ENCODE measurements at regions of chr10 and their contacts with region 1.

Region 1: GRCh38 chr10:84537447-84537931 is 209.1 kb downstream of the CCSER2 start:
- DNase-seq: no peak
- H3K4me3 ChIP-seq: no peak overlapping the region
- CTCF ChIP-seq: peak; percentile 53

Region 2: DNA sequence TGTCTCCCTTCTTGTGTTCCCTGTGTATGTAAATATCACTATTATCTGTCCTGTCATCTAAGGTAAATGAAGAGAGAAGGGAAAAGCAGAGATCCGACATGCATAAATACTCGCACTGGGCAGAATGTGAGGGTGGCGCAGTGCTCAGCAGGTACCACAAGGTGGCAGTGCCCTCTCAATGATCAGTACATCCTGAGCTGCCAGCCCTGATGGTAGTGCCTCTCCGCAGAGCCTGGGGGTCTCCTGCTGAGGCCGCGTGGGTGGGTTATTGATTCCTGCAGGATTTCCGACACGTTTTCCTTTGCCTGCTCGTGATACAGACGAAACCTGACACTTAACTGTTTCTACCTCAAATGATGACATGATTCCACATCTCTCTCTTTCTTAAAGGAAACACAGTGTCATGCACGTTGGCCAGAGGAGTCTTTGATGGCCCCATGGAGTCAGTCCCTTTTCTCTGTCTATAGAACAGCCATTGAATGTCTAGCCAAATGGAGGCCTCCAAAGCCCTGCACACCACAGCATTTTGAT is 272.8 kb before region 1 on chr10:
- CTCF ChIA-PET with region 1: interaction called, 631 read pairs
- POLR2A ChIA-PET with region 1: interaction called, 5 read pairs
- DNase-seq: no peak
- H3K4me3 ChIP-seq: no peak overlapping the region
- CTCF ChIP-seq: peak; percentile 98

Region 3: DNA sequence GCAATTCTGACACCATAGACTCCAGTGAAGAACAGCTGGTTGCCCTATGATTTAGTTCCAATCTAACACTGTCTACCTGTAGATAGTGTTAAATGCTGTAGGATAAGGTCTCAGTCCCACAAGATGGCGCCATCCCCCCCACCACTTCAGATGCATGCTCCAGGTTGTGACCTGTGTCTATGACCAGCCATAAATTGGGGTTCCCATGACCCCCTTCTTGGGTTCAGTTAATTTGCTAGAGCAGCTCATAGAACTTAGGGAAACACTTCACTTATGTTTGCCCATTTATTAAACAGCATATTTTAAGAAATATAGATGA is 196.0 kb before region 1 on chr10:
- CTCF ChIA-PET with region 1: interaction called, 10 read pairs
- POLR2A ChIA-PET with region 1: no interaction called
- DNase-seq: no peak
- H3K4me3 ChIP-seq: no peak overlapping the region
- CTCF ChIP-seq: no peak

Region 4: GRCh38 chr10:84375011-84375410 is 162.5 kb before region 1 on chr10:
- CTCF ChIA-PET with region 1: interaction called, 283 read pairs
- POLR2A ChIA-PET with region 1: no interaction called
- DNase-seq: peak; percentile 19
- H3K4me3 ChIP-seq: no peak overlapping the region
- CTCF ChIP-seq: peak; percentile 65

Region 5: GRCh38 chr10:84429926-84430520 is 107.5 kb before region 1 on chr10:
- CTCF ChIA-PET with region 1: interaction called, 44 read pairs
- POLR2A ChIA-PET with region 1: interaction called, 3 read pairs
- DNase-seq: no peak
- H3K4me3 ChIP-seq: no peak overlapping the region
- CTCF ChIP-seq: peak; percentile 63

Region 6: GRCh38 chr10:84523526-84523925 is 14.0 kb before region 1 on chr10:
- CTCF ChIA-PET with region 1: interaction called, 26 read pairs
- POLR2A ChIA-PET with region 1: no interaction called
- DNase-seq: no peak
- H3K4me3 ChIP-seq: no peak overlapping the region
- CTCF ChIP-seq: no peak

Region 7: GRCh38 chr10:84820120-84820519 is 282.6 kb after region 1 on chr10:
- CTCF ChIA-PET with region 1: interaction called, 10 read pairs
- POLR2A ChIA-PET with region 1: no interaction called
- DNase-seq: no peak
- H3K4me3 ChIP-seq: no peak overlapping the region
- CTCF ChIP-seq: no peak

Region 8: GRCh38 chr10:84845624-84846261 is 308.3 kb after region 1 on chr10:
- CTCF ChIA-PET with region 1: no interaction called
- POLR2A ChIA-PET with region 1: no interaction called
- DNase-seq: no peak
- H3K4me3 ChIP-seq: no peak overlapping the region
- CTCF ChIP-seq: no peak

Region 9: GRCh38 chr10:85047170-85047834 is 509.8 kb after region 1 on chr10:
- CTCF ChIA-PET with region 1: no interaction called
- POLR2A ChIA-PET with region 1: no interaction called
- DNase-seq: no peak
- H3K4me3 ChIP-seq: no peak overlapping the region
- CTCF ChIP-seq: no peak